Posterior vena cava (tissue), 2 donors: ENCODE measurements at regions of chr7 and their contacts with region 1.

Region 1: DNA sequence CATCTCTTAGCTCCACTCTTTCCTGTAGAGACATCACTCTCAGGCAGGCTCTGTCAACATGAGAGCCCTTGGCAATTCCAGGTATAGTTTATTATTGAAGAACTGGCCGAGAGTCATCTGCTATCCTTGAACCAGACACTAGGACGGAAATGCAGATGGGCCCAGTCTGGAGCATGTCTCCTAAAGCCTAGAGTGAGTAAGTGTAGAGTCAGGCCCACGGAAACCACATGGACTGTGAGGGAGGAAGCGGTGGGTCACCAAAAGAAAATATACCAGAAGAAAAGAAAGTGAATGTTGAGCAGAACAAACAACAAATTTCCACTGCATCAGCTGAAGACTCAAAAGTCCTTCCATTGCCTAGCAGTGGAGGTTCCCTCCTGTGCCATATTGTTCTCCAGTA is 15.7 kb upstream of the RELN start:
- DNase-seq: no peak

Region 2: DNA sequence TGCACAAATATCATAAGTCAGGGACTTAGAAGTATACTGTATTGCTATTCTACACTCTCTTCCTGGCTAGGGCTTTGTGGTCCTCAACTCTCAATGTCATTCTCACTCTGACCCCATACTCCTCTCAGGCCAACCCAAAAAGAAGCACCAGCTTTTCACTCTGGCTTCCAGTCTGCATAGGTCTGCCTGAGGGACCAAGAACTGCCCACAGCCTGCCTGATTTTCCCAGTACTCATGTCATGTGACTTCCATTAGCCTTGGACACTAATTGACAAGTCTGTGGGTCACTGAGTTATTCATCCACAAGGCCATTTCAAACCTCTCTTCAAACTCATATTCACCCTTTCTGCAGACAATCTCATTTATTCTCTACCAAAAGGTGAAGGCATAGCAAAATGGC is 688.2 kb before region 1 on chr7:
- intact Hi-C with region 1: no loop called
- DNase-seq: no peak

Region 3: GRCh38 chr7:104018425-104018824 is 13.2 kb after region 1 on chr7:
- intact Hi-C with region 1: loop called in 1 of 2 experiments (anchors 2 kb)
- DNase-seq: no peak